ENCODE measurements at regions of chr3 and their contacts with region 1.

Region 1: DNA sequence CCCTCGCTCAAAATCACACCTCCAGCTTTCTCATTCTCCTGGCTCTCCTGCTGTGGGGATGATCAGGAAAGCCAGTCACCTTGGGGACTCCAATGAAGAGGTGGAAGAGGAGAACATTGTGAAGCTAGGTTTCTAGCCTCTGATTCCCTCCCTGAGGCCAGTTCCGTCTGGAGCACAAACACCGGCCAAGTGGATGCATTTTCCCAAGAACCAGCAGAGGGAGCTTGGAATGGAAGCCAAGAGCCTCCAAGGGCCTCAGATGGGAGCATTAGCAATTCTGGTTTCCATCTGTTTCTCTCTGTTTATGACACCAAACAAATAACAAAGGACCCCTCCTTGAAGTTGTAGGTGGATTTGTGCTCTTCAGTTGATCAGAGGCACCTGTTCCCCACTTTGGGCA is 40.6 kb upstream of the NMNAT3 start:
- DNase-seq: peak in 4 of 5 donors; percentile 26 to 57 (median 40)
- ATAC-seq: peak; percentile 37 to 79 (median 66)
- H3K4me3 ChIP-seq: no peak overlapping the region
- H3K27ac ChIP-seq: no peak overlapping the region
- H3K4me1 ChIP-seq: no peaks in the 10 kb centered on the region
- H3K27me3 ChIP-seq: peaks cover 0 to 3% (median 0%) of the 10 kb centered on the region in 9 donors
- CTCF ChIP-seq: peak; percentile 32 to 65 (median 51)
- POLR2A ChIP-seq: no peak

Region 2: DNA sequence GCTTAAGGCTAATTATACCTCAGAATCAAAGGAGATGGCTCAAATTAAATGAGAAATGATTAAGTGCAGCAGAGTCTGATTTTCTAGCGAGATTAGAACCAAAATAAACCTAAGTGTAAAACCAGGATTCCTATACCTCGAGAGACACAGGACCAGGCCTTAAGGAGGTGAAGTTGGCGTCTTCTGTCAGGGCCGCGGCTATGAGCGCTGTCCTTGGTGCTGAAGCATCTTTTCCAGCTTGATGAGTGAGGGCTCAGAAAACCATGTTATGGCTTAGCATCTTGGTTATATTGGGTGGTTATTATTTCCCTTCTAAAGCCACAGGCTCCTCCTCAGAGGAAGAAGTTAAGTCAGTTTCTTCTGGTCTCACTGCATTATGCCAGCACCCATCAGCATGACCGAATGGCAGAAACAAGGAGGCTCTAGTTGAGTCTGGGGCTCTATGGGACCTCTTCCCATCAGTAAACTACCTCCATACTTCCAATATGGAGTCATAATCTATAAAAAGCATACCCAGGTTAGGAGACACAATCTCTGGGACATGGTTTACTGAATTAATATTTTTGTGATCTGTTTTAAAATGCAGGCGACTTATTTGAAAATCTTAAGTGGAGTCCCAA is 79.4 kb after region 1 on chr3:
- intact Hi-C with region 1: no loop called
- DNase-seq: peak in 2 of 5 donors; percentile 31 to 44
- ATAC-seq: peak in 1 of 4 donors; percentile 48
- H3K4me3 ChIP-seq: no peak overlapping the region
- H3K27ac ChIP-seq: no peak overlapping the region
- H3K4me1 ChIP-seq: no peaks in the 10 kb centered on the region
- H3K27me3 ChIP-seq: no peaks in the 10 kb centered on the region
- CTCF ChIP-seq: no peak
- POLR2A ChIP-seq: no peak

Region 3: GRCh38 chr3:139928708-139929505 is 210.5 kb after region 1 on chr3:
- intact Hi-C with region 1: loop called in 9 of 10 experiments (anchors 1 to 10 kb)
- DNase-seq: no peak
- ATAC-seq: peak in 1 of 4 donors; percentile 50
- H3K4me3 ChIP-seq: no peak overlapping the region
- H3K27ac ChIP-seq: no peak overlapping the region
- H3K4me1 ChIP-seq: no peaks in the 10 kb centered on the region
- H3K27me3 ChIP-seq: peaks cover 0 to 14% (median 0%) of the 10 kb centered on the region in 9 donors
- CTCF ChIP-seq: no peak
- POLR2A ChIP-seq: no peak

Region 4: GRCh38 chr3:140051019-140051957 is 332.9 kb after region 1 on chr3:
- intact Hi-C with region 1: no loop called
- DNase-seq: peak in 2 of 5 donors; percentile 19 to 24
- ATAC-seq: peak; percentile 34 to 68 (median 58)
- H3K4me3 ChIP-seq: no peak overlapping the region
- H3K27ac ChIP-seq: no peak overlapping the region
- H3K4me1 ChIP-seq: peaks cover 0 to 7% (median 0%) of the 10 kb centered on the region in 12 donors
- H3K27me3 ChIP-seq: no peaks in the 10 kb centered on the region
- CTCF ChIP-seq: peak; percentile 9 to 61 (median 50)
- POLR2A ChIP-seq: no peak